HCT116 (cell line): ENCODE measurements at regions of chr2 and their contacts with region 1.

Region 1: DNA sequence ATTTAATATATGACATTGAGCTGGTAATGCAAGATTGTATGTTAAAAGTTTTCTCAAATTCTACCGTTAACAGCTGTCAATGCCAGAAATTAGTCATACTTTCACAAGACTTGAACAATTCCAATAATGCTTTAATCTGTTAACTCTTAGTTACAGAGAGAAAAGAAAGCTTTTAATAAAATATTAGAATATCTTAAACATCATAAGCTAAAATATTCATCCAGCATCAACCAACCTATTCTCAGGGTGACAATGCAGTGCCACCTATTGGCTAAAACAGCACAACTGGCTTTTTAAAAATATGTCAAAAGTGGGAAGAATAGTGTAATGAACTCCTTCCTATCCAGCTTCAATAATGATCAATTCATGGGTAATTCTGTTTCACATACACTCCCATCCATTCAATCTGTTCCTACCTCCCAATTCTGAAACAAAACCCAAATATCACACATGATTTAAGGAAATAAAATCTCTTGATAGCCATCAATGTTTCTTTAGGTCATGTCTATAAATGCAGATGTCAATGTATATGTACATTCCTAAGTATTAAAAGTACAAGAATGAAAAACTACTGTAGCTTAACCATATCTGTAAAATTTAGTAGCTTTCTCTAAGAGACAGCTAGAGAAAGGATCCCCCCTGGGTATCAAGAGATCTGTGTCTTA is 79.8 kb upstream of the CCDC141 start:
- DNase-seq: no peak
- ATAC-seq: peak; percentile 72
- H3K4me3 ChIP-seq: no peak overlapping the region
- H3K27ac ChIP-seq: no peak overlapping the region
- H3K4me1 ChIP-seq: no peaks in the 10 kb centered on the region
- H3K27me3 ChIP-seq: no peaks in the 10 kb centered on the region
- CTCF ChIP-seq: peak; percentile 57 to 69 (median 65); a peak in 5 of 6 replicates
- POLR2A ChIP-seq: no peak
- RAD21 ChIP-seq: peak; percentile 73

Region 2: DNA sequence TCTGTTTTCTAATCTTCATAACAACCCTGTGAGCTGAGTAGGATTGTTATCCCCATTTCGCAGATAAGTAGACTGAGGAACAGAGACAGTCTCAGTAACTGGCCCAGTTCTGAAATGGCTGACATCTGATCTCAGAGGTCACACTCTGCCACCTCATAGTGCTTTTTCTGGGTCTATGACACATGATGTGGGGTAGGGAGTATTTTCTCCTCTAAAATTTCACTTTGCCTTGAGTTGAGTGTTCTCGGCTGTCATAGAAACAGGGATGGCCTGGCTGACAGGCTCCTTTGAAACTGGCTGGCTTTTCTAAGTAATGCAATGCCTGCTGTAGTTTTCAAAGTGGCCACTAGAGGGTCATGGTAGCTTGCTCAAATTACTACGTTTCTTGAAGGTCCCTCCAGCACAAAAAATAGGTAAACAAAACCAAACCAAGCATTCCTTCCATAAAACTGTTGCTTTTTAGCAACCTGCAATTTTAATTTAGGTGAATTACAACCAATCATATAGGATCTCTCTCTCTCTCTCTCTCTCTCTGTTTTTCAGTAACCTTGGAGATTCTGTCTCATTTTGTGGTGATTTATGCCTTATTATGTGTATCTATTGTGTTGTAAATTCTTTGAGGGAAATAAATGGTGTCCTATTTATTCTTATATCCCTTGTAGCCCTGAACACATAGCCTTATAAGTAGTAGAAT is 238.3 kb before region 1 on chr2:
- CTCF ChIA-PET with region 1: interaction called, 12 read pairs
- POLR2A ChIA-PET with region 1: no interaction called
- RAD21 ChIA-PET with region 1: no interaction called
- intact Hi-C with region 1: loop called (anchors 1 kb)
- DNase-seq: peak; percentile 59
- ATAC-seq: peak; percentile 97
- H3K4me3 ChIP-seq: no peak overlapping the region
- H3K27ac ChIP-seq: no peak overlapping the region
- H3K4me1 ChIP-seq: no peaks in the 10 kb centered on the region
- H3K27me3 ChIP-seq: no peaks in the 10 kb centered on the region
- CTCF ChIP-seq: peak; percentile 56 to 92 (median 90); a peak in 5 of 6 replicates
- POLR2A ChIP-seq: no peak
- RAD21 ChIP-seq: peak; percentile 72

Region 3: DNA sequence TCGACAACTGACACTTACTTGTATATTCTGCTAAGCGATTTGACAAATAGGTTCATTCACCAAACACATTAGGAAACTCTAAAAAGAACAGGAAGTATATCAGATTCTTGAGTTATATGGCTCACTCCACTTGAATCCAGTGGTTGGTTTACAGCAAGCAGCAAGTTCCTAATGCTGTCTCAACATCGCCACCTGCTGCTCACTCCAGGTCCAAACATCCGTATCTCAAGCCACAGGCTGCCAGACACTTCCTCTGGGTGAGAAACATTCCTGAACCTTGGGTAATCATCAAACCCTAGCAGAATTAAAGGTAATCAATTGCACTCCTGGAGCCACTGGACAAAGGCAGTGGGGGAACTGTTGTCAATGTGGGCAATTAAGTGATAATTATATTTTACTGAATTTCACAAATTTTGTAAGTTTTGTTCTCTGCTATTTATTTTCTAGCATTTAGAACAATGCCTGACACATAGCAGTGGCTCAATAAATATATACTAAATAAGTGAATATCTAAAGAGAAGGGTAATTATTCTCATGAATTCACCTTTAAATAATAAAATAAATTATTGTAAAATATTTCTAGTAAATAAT is 215.4 kb before region 1 on chr2:
- CTCF ChIA-PET with region 1: no interaction called
- POLR2A ChIA-PET with region 1: no interaction called
- RAD21 ChIA-PET with region 1: no interaction called
- intact Hi-C with region 1: loop called (anchors 5 kb)
- DNase-seq: peak; percentile 63
- ATAC-seq: peak; percentile 99
- H3K4me3 ChIP-seq: no peak overlapping the region
- H3K27ac ChIP-seq: no peak overlapping the region
- H3K4me1 ChIP-seq: no peaks in the 10 kb centered on the region
- H3K27me3 ChIP-seq: no peaks in the 10 kb centered on the region
- CTCF ChIP-seq: peak; percentile 73 to 88 (median 83)
- POLR2A ChIP-seq: no peak
- RAD21 ChIP-seq: peak; percentile 84